Thyroid gland (tissue), 4 donors: ENCODE measurements at regions of chr13 and their contacts with region 1.

Region 1: GRCh38 chr13:28324181-28324789 is 170.6 kb downstream of the FLT1 start:
- DNase-seq: peak; percentile 58 to 59
- H3K4me3 ChIP-seq: no peak overlapping the region
- H3K27ac ChIP-seq: no peak overlapping the region
- H3K4me1 ChIP-seq: peaks cover 0 to 4% of the 10 kb centered on the region in 2 donors
- H3K27me3 ChIP-seq: no peaks in the 10 kb centered on the region
- CTCF ChIP-seq: peak; percentile 21 to 76 (median 64)
- POLR2A ChIP-seq: no peak

Region 2: DNA sequence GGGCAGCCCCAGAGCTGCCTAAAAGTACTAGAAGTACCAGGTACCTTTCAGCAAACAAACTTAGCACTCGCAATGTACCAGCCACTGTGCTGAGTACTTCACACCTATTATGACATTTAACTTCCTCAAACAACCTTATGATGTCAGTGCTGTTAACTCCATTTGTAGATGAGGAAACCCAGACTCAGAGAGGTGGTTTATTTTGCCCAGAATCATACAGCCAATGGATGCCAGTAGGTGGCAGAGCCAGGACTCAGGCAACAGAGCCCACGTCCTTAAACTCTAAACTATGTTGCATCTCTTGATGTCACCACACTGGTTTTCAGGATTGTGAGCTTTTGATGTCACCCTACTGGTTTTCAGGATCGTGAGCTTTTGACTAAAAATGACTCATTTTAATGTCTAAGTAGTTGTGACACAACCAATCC is 91.7 kb after region 1 on chr13:
- intact Hi-C with region 1: no loop called
- DNase-seq: no peak
- H3K4me3 ChIP-seq: no peak overlapping the region
- H3K27ac ChIP-seq: no peak overlapping the region
- H3K4me1 ChIP-seq: no peaks in the 10 kb centered on the region
- H3K27me3 ChIP-seq: no peaks in the 10 kb centered on the region
- CTCF ChIP-seq: no peak
- POLR2A ChIP-seq: no peak

Region 3: GRCh38 chr13:28792992-28793391 is 468.7 kb after region 1 on chr13:
- intact Hi-C with region 1: loop called (anchors 10 kb)
- DNase-seq: no peak
- H3K4me3 ChIP-seq: no peak overlapping the region
- H3K27ac ChIP-seq: no peak overlapping the region
- H3K4me1 ChIP-seq: no peaks in the 10 kb centered on the region
- H3K27me3 ChIP-seq: no peaks in the 10 kb centered on the region
- CTCF ChIP-seq: no peak
- POLR2A ChIP-seq: no peak